H1 (cell line): ENCODE measurements at regions of chr11 and their contacts with region 1.

Region 1: GRCh38 chr11:9330387-9331384 is 16.3 kb upstream of the TMEM41B start:
- DNase-seq: no peak
- H3K4me3 ChIP-seq: no peak overlapping the region
- H3K27ac ChIP-seq: no peak overlapping the region
- H3K4me1 ChIP-seq: no peaks in the 10 kb centered on the region
- H3K27me3 ChIP-seq: no peaks in the 10 kb centered on the region
- CTCF ChIP-seq: no peak
- EP300 ChIP-seq: no peak
- POLR2A ChIP-seq: no peak
- RAD21 ChIP-seq: no peak

Region 2: GRCh38 chr11:9347100-9347499 is 16.4 kb after region 1 on chr11:
- CTCF ChIA-PET with region 1: interaction called, 11 read pairs
- POLR2A ChIA-PET with region 1: no interaction called
- DNase-seq: no peak
- H3K4me3 ChIP-seq: no peak overlapping the region
- H3K27ac ChIP-seq: no peak overlapping the region
- H3K4me1 ChIP-seq: peaks cover 0 to 10% (median 4%) of the 10 kb centered on the region in 4 experiments; a peak in 2 of 7 replicates
- H3K27me3 ChIP-seq: no peaks in the 10 kb centered on the region
- CTCF ChIP-seq: no peak
- EP300 ChIP-seq: no peak
- POLR2A ChIP-seq: no peak
- RAD21 ChIP-seq: no peak

Region 3: DNA sequence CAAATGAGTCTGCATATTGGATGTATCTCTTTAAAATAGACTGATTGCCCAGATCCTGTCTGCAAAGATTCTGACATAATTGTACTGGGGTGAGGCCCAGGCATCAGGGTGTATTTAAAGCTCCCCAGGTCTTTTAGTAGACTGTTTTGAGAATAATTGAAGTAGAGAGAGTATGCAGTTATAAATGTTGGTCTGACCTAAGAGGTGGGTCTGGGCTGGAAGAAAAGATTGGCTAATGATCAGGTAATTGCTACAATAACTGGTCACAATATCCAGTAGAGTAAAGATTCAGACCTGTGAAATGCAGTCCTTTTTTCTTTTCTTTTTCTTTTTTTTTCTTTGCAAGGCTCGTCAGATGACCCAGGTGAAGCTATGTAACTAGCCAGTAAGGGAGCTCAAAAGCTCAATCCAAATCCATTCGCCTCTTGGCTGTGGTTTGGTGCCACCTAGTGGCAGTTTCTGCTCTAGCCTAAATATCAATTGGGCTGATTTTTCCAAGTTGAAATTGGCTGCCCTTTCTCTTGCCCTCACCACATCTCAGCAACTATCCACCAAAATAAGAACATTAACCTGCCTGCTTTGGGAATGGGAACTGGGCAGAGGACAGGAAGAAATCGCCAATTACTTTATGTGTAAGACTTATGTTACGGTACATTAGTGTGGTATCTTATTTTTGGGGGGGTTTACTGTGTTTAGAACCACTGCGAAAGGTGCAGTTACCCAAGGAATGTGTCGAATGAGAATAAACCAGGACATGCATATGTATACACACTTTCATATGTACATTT is 176.0 kb after region 1 on chr11:
- CTCF ChIA-PET with region 1: no interaction called
- POLR2A ChIA-PET with region 1: no interaction called
- DNase-seq: peak; percentile 79 to 86
- H3K4me3 ChIP-seq: peak overlapping the region in 1 of 4 experiments; percentile 37; a peak in 2 of 8 replicates
- H3K27ac ChIP-seq: no peak overlapping the region; the same call in 1 of the 2 replicates
- H3K4me1 ChIP-seq: peaks cover 0 to 6% (median 3%) of the 10 kb centered on the region in 4 experiments; a peak in 5 of 7 replicates
- H3K27me3 ChIP-seq: no peaks in the 10 kb centered on the region
- CTCF ChIP-seq: peak; percentile 24 to 94 (median 82)
- EP300 ChIP-seq: no peak
- POLR2A ChIP-seq: no peak
- RAD21 ChIP-seq: peak; percentile 92 to 93